PC-3 (cell line): ENCODE measurements at regions of chr14 and their contacts with region 1.

Region 1: DNA sequence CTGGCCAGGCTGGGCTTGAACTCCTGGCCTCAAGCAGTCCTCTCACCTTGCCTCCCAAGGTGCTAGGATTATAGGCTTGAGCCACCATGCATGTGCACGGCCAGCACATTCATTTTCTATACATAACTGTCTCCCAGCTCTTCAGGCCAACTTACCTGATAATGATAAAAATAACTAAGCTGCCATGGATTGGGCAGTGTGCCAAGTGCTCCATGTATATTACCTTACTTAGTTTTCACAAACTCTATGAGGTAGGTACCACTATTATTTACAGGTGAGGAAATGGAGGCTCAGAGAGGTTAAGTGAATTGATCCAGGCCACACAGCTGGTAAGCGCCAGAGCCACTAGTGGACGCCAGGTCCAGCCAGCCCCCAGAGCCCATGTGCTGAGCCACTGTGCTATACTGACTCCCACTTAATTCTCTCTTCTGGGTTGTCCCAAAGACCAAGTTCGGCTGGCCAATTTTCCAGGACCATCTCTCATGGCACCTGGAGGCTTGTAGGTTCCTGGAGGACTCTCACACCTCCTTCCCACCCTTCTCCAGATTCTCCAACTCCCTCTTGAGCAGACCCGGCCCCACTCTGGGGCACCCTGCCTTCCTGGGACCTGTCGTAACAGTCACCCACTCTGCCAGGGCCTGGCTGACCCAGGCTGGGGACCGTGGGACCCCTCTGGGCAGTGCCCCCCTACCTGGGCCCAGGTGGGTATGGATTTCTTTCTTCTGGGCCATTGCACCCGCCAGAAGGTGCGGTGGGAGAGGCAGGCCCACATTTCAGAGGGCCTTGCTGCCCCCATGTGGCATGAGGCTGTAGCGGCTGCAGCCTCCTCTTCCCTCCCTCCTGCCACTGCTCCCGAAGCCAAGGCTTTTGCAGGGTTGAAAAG is 30.2 kb upstream of the CIPC start:
- DNase-seq: peak; percentile 95
- ATAC-seq: peak; percentile 78
- H3K4me3 ChIP-seq: no peak overlapping the region
- H3K27ac ChIP-seq: no peak overlapping the region
- H3K4me1 ChIP-seq: peaks cover 38% of the 10 kb centered on the region
- H3K27me3 ChIP-seq: no peaks in the 10 kb centered on the region
- CTCF ChIP-seq: peak; percentile 100

Region 2: DNA sequence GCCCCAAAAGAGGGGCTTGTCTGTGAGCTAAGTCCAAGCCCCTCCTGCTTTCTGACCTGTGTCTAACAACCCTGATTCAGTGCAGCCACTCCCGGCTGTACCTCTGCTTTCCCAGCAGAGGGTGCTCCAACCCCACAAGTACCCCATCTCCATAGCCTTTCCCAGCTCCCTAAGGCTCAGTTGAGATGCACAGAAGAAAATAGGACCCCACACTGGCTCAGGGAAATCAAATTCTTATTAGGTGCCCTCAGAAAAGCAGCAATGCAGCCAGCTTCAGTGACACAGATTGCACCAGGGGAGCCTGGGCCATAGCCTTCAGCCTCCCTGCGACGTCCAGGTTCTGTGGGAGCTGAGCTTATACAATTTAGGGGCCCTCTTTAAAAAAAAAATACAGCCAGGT is 191.8 kb before region 1 on chr14:
- CTCF ChIA-PET with region 1: interaction called, 26 read pairs
- POLR2A ChIA-PET with region 1: no interaction called
- intact Hi-C with region 1: loop called (anchors 1 kb)
- DNase-seq: peak; percentile 87
- ATAC-seq: peak; percentile 96
- H3K4me3 ChIP-seq: no peak overlapping the region
- H3K27ac ChIP-seq: no peak overlapping the region
- H3K4me1 ChIP-seq: no peaks in the 10 kb centered on the region
- H3K27me3 ChIP-seq: no peaks in the 10 kb centered on the region
- CTCF ChIP-seq: peak; percentile 96

Region 3: DNA sequence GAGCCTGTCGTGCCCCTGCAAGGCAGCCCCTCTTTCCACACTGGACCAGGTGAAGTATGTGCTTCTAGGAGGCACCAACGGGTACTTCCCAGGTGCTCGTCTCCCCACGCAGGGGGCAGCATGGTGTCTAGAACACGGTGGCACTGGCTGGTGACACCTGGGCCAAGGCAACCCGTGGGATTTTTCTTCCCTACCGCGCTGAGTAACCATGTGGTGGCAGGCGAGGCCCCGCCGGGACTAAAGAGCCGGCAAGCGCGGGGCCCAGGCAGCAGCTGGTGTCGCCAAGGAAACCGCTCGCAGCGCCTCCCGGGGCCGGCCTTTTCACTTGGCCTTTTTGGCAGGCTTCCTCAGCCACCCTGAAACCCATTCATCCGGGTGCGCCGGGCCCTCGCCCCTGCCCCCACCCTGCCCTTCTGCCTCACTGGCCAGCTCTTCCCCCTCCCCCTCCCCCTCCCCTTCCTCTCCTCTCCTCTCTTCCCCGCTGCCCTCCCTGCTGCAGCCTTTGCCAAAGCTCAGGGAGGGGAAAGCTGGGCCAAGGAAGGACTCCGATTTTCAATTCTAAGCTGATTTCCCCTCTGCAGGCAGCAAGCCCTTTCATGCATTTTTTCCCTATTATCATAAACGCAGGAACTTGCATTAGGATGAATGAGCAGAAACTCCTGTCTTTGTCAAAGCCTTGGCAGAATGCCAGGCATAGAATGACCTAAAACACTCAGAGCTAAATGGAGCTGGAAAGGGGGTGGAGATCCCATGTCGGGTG is 120.6 kb before region 1 on chr14:
- CTCF ChIA-PET with region 1: interaction called, 5 read pairs
- POLR2A ChIA-PET with region 1: no interaction called
- intact Hi-C with region 1: loop called (anchors 1 kb)
- DNase-seq: peak; percentile 92
- ATAC-seq: peak; percentile 89
- H3K4me3 ChIP-seq: no peak overlapping the region
- H3K27ac ChIP-seq: peak overlapping the region; percentile 95
- H3K4me1 ChIP-seq: peaks cover 46% of the 10 kb centered on the region
- H3K27me3 ChIP-seq: no peaks in the 10 kb centered on the region
- CTCF ChIP-seq: peak; percentile 52

Region 4: DNA sequence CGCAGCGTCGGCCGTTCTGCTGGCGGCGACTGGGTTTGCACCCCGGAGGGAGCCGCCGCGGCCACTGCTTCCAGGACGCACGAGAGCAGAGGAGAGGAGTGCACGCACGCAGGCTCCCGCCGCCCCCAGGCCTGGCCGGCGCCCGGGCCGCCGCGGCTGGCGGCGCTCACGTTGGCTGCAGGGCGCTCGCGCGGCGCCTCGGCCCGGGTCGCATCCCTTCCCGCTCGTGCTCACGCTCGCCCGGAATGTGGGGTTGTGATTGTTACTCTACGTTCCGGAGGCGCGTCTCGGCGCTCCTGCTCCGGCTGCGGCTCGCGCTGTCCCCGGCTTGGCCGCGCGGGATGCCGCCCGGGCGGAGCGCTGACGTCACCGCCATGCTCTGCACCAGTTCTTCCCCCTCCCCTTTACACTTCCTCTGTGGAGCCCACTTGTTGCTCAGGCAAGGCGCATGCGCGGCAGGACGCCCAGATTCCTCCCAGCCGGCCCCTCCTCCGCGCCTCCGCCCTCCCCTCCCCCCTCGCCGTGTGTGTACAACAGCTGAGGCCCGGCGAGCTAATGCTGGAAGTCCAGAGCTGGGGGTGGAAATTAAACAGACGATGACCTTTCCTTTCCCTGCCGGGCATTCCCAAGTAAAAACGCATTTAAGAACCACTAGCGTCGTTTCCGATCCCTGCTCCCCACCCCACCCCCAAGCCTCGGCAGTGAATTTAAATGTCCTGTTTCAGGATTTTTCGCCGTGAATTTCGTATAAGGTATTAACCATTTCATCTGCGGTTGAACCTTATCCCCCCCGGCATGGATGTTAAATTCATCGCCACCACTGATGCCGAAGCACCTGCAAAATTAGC is 39.3 kb before region 1 on chr14 and contains the start of gene IRF2BPL:
- CTCF ChIA-PET with region 1: interaction called, 4 read pairs
- POLR2A ChIA-PET with region 1: interaction called, 5 read pairs
- intact Hi-C with region 1: loop called (anchors 1 kb)
- DNase-seq: peak; percentile 97
- ATAC-seq: peak; percentile 48
- H3K4me3 ChIP-seq: peak within 1 kb of the TSS; percentile 99
- H3K27ac ChIP-seq: peak within 1 kb of the TSS; percentile 91
- H3K4me1 ChIP-seq: peaks cover 48% of the 10 kb centered on the region
- H3K27me3 ChIP-seq: no peaks in the 10 kb centered on the region
- CTCF ChIP-seq: no peak
- total RNA-seq, gene IRF2BPL: 113 and 146 TPM in 2 replicates

Region 5: GRCh38 chr14:77097700-77098528 is 30.0 kb after region 1 on chr14 and contains the start of gene CIPC:
- CTCF ChIA-PET with region 1: interaction called, 6 read pairs
- POLR2A ChIA-PET with region 1: no interaction called
- intact Hi-C with region 1: loop called (anchors 1 kb)
- DNase-seq: peak; percentile 100
- ATAC-seq: peak; percentile 87
- H3K4me3 ChIP-seq: peak within 1 kb of the TSS; percentile 88
- H3K27ac ChIP-seq: peak within 1 kb of the TSS; percentile 86
- H3K4me1 ChIP-seq: peaks cover 27% of the 10 kb centered on the region
- H3K27me3 ChIP-seq: no peaks in the 10 kb centered on the region
- CTCF ChIP-seq: no peak
- total RNA-seq, gene CIPC: 26.0 and 26.6 TPM in 2 replicates

Region 6: GRCh38 chr14:77290741-77291140 is 222.9 kb after region 1 on chr14:
- CTCF ChIA-PET with region 1: no interaction called
- POLR2A ChIA-PET with region 1: no interaction called
- intact Hi-C with region 1: no loop called
- DNase-seq: peak; percentile 25
- ATAC-seq: no peak
- H3K4me3 ChIP-seq: no peak overlapping the region
- H3K27ac ChIP-seq: no peak overlapping the region
- H3K4me1 ChIP-seq: no peaks in the 10 kb centered on the region
- H3K27me3 ChIP-seq: no peaks in the 10 kb centered on the region
- CTCF ChIP-seq: peak; percentile 48; the same call in 1 of the 2 replicates